A673 (cell line): ENCODE measurements at regions of chr1 and their contacts with region 1.

Region 1: DNA sequence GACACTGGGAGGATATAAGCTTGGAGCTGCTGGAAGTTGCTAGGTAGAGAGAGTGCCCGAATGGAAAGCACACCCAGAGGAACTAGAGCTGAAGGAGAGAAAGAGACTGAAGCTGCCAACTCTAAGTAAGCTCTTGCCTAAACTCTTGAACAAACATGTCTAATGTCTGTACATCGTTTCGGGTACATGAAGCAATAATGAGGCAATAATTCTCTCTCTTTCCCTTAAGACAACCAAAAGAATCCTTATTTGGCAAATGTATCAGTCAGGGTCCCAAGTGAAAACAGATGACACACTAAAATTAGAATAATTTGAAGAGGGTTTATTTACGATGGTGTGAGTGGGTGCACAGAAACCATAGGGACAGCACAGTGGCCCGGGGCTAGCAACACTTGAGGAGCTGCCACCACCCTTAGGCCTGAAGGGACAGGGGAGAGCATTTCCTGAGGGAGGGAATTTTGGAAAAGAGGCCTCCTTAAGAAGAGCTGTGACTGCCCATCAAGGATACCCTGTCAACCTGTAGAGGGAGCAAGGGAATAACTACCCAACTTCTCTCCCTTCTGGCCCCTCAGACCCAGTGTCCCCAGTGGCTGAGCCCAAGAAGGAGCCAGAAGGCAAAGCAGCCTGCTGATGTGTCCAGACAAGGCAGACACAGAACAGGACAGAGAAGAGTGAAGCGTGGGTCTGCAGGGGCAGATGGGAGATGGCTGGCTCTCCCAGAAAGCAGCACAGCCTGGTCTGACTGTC is 36.1 kb upstream of the KHDRBS1 start:
- DNase-seq: peak; percentile 60
- H3K4me3 ChIP-seq: no peak overlapping the region
- H3K27ac ChIP-seq: peak overlapping the region; percentile 66
- H3K4me1 ChIP-seq: peaks cover 14% of the 10 kb centered on the region
- H3K27me3 ChIP-seq: no peaks in the 10 kb centered on the region
- CTCF ChIP-seq: peak; percentile 58

Region 2: GRCh38 chr1:31648641-31649357 is 328.8 kb before region 1 on chr1:
- CTCF ChIA-PET with region 1: interaction called, 11 read pairs
- POLR2A ChIA-PET with region 1: no interaction called
- intact Hi-C with region 1: no loop called
- DNase-seq: no peak
- H3K4me3 ChIP-seq: no peak overlapping the region
- H3K27ac ChIP-seq: no peak overlapping the region
- H3K4me1 ChIP-seq: peaks cover 8% of the 10 kb centered on the region
- H3K27me3 ChIP-seq: no peaks in the 10 kb centered on the region
- CTCF ChIP-seq: no peak

Region 3: DNA sequence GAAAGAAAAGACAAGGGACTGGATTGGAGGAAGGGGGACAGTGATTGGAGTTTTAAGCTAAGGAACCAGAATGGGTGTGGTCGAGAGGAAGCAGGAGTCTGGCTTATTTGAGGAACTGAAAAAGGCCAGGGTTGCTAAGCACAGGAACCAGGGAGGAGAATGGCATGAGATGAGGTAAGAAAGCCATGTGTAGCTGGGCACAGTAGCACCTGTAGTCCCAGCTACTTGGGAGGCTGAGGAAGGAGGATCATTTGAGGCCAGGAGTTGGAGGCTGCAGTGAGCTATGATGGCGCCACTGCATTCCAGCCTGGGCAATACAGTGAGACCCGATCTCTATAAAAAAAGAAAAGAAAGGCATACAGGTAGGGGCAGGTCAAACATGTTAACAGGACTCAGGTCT is 28.0 kb after region 1 on chr1:
- CTCF ChIA-PET with region 1: interaction called, 14 read pairs
- POLR2A ChIA-PET with region 1: no interaction called
- intact Hi-C with region 1: no loop called
- DNase-seq: no peak
- H3K4me3 ChIP-seq: no peak overlapping the region
- H3K27ac ChIP-seq: no peak overlapping the region
- H3K4me1 ChIP-seq: peaks cover 11% of the 10 kb centered on the region
- H3K27me3 ChIP-seq: no peaks in the 10 kb centered on the region
- CTCF ChIP-seq: no peak

Region 4: DNA sequence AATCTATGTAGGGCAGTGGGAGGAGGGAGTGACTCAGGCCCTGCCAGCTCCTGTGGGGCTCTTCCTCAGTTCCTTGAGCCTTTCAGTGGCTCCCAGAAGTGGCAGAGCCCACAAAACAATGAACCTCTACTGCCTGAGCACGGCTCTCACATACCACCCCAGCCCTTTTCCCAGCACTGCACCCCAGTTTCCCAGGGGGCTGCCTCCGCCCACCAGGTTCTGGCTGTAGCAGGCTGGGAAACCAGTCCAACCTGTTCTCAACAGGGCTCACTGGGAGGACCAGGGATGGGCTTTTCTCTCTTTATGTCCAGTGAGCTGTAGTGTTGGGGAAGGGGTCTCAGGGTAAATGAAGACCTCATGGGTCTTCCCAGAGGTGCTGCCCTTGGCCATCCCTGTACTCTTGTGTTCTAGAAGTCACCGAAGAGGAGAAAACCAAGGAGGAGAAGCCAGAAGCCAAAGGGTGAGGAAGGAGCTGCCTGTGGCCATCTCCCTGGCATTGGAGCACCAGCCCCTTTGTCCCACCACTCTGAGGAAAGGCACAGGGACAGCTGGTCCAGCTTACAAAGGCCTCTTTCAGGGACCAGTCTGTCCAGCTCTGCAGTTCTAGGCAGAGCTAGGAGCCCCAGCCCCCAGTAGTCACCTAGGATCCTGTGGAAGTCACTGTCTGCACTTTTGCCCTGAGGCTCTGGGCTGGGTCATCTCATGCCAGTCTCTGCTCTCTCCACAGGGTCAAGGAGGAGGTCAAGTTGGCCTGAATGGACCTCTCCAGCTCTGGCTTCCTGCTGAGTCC is 354.9 kb after region 1 on chr1:
- CTCF ChIA-PET with region 1: no interaction called
- POLR2A ChIA-PET with region 1: no interaction called
- intact Hi-C with region 1: no loop called
- DNase-seq: no peak
- H3K4me3 ChIP-seq: no peak overlapping the region
- H3K27ac ChIP-seq: peak overlapping the region; percentile 44
- H3K4me1 ChIP-seq: peaks cover 12% of the 10 kb centered on the region
- H3K27me3 ChIP-seq: no peaks in the 10 kb centered on the region
- CTCF ChIP-seq: no peak